Left cardiac atrium (tissue), 4 donors: ENCODE measurements at regions of chr3 and their contacts with region 1.

Region 1: GRCh38 chr3:20039766-20040475 is at the start of gene KAT2B:
- DNase-seq: peak; percentile 80
- ATAC-seq: peak; percentile 79 to 81
- total RNA-seq, gene KAT2B: 59.8 to 73.3 TPM

Region 2: GRCh38 chr3:19946832-19947548 is 92.9 kb before region 1 on chr3 and contains the start of gene RAB5A:
- intact Hi-C with region 1: loop called in 1 of 2 experiments (anchors 5 kb)
- DNase-seq: peak; percentile 97
- ATAC-seq: peak; percentile 97 to 98
- total RNA-seq, gene RAB5A: 40.9 to 71.2 TPM

Region 3: GRCh38 chr3:20080956-20081554 is 41.1 kb after region 1 on chr3:
- intact Hi-C with region 1: loop called in 1 of 2 experiments (anchors 5 kb)
- DNase-seq: peak; percentile 85
- ATAC-seq: peak; percentile 99

Region 4: DNA sequence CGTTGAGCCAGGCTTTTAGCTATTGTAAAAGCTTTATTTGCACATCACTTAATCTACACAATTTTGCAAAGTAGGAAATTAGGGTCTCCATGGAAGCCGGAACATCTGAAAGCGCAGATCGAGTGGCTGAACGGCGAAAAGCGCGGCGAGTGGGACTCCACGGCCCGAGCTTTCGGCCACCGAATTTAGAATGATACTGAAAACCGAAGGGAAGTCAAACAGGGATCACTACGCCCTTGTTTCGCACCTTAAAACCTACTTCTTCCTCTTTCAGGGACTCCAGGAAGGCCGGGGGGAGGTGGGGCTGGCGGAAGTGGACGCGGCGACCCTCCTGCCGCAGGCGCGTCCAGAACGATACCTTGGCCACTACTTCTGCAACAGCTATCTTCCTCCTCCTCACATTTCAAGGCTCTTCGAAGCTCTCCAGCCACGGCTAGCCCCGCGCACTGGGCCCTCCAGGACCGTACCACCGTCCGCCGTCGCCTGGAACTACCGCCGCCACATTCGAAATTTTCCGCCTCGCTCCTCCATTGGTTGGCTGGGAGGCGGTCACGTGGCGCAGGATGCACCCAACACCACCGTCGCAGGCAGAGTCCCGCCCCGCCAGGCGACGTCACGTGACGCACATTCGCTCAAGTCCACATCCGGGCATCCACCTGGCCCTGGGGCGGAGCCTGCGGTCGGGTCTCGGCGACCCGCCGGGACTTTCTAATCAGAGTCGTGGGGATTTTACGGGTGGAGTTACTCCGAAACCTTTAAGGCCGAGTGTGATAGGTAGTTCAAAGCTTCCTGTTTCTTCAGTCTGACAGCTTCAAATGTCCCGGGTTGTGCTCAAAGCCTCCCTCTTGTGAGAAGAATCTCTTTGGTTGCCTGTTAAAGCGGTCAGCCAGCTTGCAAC is 146.0 kb after region 1 on chr3 and contains the start of gene SGO1:
- intact Hi-C with region 1: loop called in 1 of 2 experiments (anchors 5 kb)
- DNase-seq: peak; percentile 100
- ATAC-seq: peak; percentile 100
- total RNA-seq, gene SGO1: 0.80 TPM in 1 of 2 donors, not detected in the other